Natural killer cell (primary cell): ENCODE measurements at regions of chr6 and their contacts with region 1.

Region 1: DNA sequence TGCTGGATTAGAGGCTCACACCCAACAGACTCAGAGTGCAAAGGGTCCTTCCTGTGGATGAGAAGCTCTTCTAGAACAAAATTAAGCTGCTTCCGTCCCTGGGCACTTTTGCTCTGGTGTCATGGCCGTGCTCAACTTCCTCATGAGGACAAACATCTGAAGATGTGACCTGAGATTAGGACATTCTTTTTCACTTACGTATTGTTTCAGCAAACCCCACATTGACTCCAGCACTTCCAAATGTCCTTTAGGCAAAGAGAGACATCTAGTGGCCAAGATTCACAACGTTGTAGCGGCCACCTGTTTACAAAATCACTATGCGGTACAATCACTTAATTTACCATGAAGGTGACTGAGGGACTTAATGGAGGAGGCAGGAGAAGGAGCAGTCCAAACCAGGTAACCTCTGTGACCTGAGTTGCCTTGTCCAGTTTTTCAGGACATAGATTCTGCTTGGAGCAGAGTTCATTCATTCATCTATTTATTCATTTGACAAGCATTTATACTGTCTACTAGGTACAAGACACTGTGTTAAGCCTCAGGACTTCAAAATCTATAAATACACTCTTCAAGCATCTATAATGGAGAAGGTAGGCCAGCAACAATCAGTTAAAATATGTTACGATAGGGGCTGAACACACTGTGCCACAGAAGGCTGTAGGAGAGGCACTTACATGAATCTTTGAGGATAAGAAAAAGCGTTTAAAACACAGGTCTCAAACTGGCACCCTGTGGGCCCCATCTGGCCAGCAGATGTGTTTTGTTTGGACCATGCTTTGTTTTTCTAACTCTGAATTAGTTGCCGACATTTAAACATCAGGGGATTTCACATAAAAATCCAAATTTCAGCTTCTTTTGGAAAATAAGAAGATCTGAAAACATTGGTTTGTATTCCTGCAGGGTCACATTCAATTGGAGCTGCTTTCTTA is 5.6 kb upstream of the ADGRF1 start:
- DNase-seq: peak in 1 of 2 donors; percentile 47
- ATAC-seq: peak in 1 of 3 donors; percentile 38
- H3K4me3 ChIP-seq: no peak overlapping the region
- H3K4me3 Mint-ChIP-seq: no peak overlapping the region
- H3K27ac ChIP-seq: no peak overlapping the region
- H3K27ac Mint-ChIP-seq: no peak overlapping the region
- H3K4me1 ChIP-seq: no peaks in the 10 kb centered on the region
- H3K4me1 Mint-ChIP-seq: peaks cover 5 to 6% of the 10 kb centered on the region in 2 donors
- H3K27me3 ChIP-seq: no peaks in the 10 kb centered on the region
- H3K27me3 Mint-ChIP-seq: peaks cover 10 to 13% of the 10 kb centered on the region in 2 donors
- CTCF ChIP-seq: peak; percentile 29

Region 2: GRCh38 chr6:45327956-45328522 is 1719.7 kb before region 1 on chr6 and contains the start of gene RUNX2:
- intact Hi-C with region 1: no loop called
- DNase-seq: peak in 1 of 2 donors; percentile 49
- ATAC-seq: peak; percentile 30 to 65 (median 58)
- H3K4me3 ChIP-seq: peak within 1 kb of the TSS; percentile 5
- H3K4me3 Mint-ChIP-seq: peak within 1 kb of the TSS; percentile 77
- H3K27ac ChIP-seq: peak within 1 kb of the TSS; percentile 18
- H3K27ac Mint-ChIP-seq: peak within 1 kb of the TSS; percentile 34 to 72
- H3K4me1 ChIP-seq: no peaks in the 10 kb centered on the region
- H3K4me1 Mint-ChIP-seq: peaks cover 29 to 37% of the 10 kb centered on the region in 2 donors
- H3K27me3 ChIP-seq: no peaks in the 10 kb centered on the region
- H3K27me3 Mint-ChIP-seq: no peaks in the 10 kb centered on the region
- CTCF ChIP-seq: no peak
- total RNA-seq, gene RUNX2: 5.0 to 19.2 (median 7.0) TPM

Region 3: GRCh38 chr6:46848684-46849360 is 198.9 kb before region 1 on chr6:
- intact Hi-C with region 1: loop called (anchors 10 kb)
- DNase-seq: peak; percentile 57 to 64
- ATAC-seq: peak; percentile 55 to 93 (median 76)
- H3K4me3 ChIP-seq: no peak overlapping the region
- H3K4me3 Mint-ChIP-seq: peak overlapping the region; percentile 55
- H3K27ac ChIP-seq: no peak overlapping the region
- H3K27ac Mint-ChIP-seq: no peak overlapping the region
- H3K4me1 ChIP-seq: no peaks in the 10 kb centered on the region
- H3K4me1 Mint-ChIP-seq: peaks cover 6% of the 10 kb centered on the region in 2 donors
- H3K27me3 ChIP-seq: no peaks in the 10 kb centered on the region
- H3K27me3 Mint-ChIP-seq: peaks cover 12 to 13% of the 10 kb centered on the region in 2 donors
- CTCF ChIP-seq: peak; percentile 72